Activated naive CD4-positive, alpha-beta T cell treated with anti-CD3 and anti-CD28 coated beads for 36 hours (primary cell): ENCODE measurements at regions of chr1 and their contacts with region 1.

Region 1: GRCh38 chr1:28581536-28582247 is 10.4 kb upstream of the RAB42 start:
- DNase-seq: peak; percentile 94
- H3K4me3 Mint-ChIP-seq: peak overlapping the region; percentile 98
- H3K27ac Mint-ChIP-seq: peak overlapping the region; percentile 94
- H3K4me1 Mint-ChIP-seq: peaks cover 29% of the 10 kb centered on the region
- H3K27me3 Mint-ChIP-seq: no peaks in the 10 kb centered on the region

Region 2: GRCh38 chr1:28369371-28370238 is 212.1 kb before region 1 on chr1 and contains the start of gene PHACTR4:
- CTCF ChIA-PET with region 1: no interaction called
- intact Hi-C with region 1: loop called (anchors 5 kb)
- DNase-seq: peak; percentile 86
- H3K4me3 Mint-ChIP-seq: peak within 1 kb of the TSS; percentile 85
- H3K27ac Mint-ChIP-seq: peak within 1 kb of the TSS; percentile 92
- H3K4me1 Mint-ChIP-seq: peaks cover 25% of the 10 kb centered on the region
- H3K27me3 Mint-ChIP-seq: no peaks in the 10 kb centered on the region
- total RNA-seq, gene PHACTR4: 16.3 to 17.2 TPM

Region 3: DNA sequence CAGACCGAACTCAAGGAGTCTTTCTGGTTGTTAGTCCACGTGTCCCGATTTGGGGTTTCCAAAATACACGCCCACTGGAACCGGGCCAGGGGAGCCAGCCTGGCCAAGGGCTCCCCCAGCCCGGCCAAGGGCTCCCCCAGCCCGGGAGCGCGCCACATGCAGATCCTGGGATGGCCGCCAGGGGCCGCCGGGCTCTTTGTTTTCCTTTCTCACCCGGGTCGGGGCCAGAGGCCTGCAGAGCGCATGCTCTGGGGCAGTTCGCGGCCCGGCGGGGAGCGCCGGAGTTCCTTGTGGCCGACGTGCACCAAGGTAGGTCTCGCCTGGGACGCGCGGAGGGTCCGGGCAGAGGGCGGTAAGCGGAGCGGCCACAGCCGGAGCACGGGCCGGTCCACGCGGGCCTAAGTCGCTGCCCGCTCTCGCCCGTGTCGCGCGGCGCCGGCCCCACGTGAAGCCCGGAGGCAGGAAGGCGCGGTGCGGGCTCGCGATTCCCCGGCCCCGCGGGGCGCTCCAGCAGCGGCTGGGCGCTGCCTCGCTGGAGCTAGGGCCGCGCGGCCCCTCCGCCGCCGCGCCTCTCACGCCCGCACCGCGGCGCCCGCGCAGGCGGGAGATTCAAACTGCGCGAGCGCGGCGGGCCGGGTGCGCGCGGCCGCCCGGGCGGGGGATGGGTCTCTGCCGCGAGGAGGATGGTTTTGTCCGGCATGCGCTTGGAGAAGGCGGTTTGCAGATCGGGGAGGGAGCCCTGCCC is 63.5 kb before region 1 on chr1:
- CTCF ChIA-PET with region 1: interaction called, 7 read pairs
- intact Hi-C with region 1: loop called (anchors 1 kb)
- DNase-seq: peak; percentile 92
- H3K4me3 Mint-ChIP-seq: peak overlapping the region; percentile 90
- H3K27ac Mint-ChIP-seq: peak overlapping the region; percentile 91
- H3K4me1 Mint-ChIP-seq: peaks cover 38% of the 10 kb centered on the region
- H3K27me3 Mint-ChIP-seq: no peaks in the 10 kb centered on the region

Region 4: GRCh38 chr1:28552758-28553663 is 28.7 kb before region 1 on chr1 and contains the start of gene TRNAU1AP:
- CTCF ChIA-PET with region 1: interaction called, 8 read pairs
- intact Hi-C with region 1: loop called (anchors 1 kb)
- DNase-seq: peak; percentile 99
- H3K4me3 Mint-ChIP-seq: peak within 1 kb of the TSS; percentile 94
- H3K27ac Mint-ChIP-seq: peak within 1 kb of the TSS; percentile 97
- H3K4me1 Mint-ChIP-seq: peaks cover 19% of the 10 kb centered on the region
- H3K27me3 Mint-ChIP-seq: no peaks in the 10 kb centered on the region
- total RNA-seq, gene TRNAU1AP: 36.7 to 39.4 TPM

Region 5: GRCh38 chr1:28668191-28668955 is 86.7 kb after region 1 on chr1 and contains the start of gene GMEB1:
- CTCF ChIA-PET with region 1: no interaction called
- intact Hi-C with region 1: loop called (anchors 1 kb)
- DNase-seq: peak; percentile 87
- H3K4me3 Mint-ChIP-seq: peak within 1 kb of the TSS; percentile 86
- H3K27ac Mint-ChIP-seq: peak within 1 kb of the TSS; percentile 96
- H3K4me1 Mint-ChIP-seq: peaks cover 11% of the 10 kb centered on the region
- H3K27me3 Mint-ChIP-seq: no peaks in the 10 kb centered on the region
- total RNA-seq, gene GMEB1: 15.8 to 16.3 TPM

Region 6: DNA sequence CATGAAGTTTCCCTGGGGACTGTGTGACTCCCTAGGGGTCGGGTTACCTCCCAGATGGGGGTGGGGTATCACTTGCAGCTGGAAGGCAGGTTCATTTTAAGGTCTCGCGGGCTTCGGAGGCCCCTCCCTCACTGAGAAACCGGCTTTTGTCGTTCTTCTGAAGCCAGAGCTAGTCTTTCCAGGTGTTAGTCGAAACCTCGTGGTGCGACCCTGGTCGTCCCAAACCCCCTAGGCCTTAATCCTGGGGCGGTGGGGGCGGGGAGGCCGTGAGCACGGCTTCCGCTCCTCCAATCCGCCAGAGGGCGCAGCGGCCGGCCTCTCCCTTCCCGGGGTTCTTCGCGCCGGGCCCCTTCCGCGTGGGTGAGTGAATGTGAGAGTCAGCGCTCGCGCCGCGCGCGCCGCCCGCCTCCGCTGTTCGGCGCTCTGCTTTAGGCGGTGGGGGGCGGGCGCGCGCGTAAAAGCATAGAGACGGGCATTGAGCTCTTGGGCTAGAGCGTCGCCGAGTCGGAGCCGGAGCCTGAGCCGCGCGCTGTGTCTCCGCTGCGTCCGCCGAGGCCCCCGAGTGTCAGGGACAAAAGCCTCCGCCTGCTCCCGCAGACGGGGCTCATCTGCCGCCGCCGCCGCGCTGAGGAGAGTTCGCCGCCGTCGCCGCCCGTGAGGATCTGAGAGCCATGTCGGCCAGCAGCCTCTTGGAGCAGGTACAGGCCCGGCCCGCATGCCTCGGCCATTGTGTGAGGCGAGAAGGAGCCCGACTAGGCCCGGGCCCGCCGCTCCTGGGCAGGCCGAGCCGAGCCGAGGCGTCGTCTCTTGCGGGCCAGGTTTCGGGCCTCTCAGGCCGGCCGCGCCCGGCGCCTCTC is 155.0 kb after region 1 on chr1 and contains the start of gene YTHDF2:
- CTCF ChIA-PET with region 1: no interaction called
- intact Hi-C with region 1: loop called (anchors 1 kb)
- DNase-seq: peak; percentile 99
- H3K4me3 Mint-ChIP-seq: peak within 1 kb of the TSS; percentile 96
- H3K27ac Mint-ChIP-seq: peak within 1 kb of the TSS; percentile 92
- H3K4me1 Mint-ChIP-seq: peaks cover 33% of the 10 kb centered on the region
- H3K27me3 Mint-ChIP-seq: no peaks in the 10 kb centered on the region
- total RNA-seq, gene YTHDF2: 64.9 to 66.1 TPM

Region 7: DNA sequence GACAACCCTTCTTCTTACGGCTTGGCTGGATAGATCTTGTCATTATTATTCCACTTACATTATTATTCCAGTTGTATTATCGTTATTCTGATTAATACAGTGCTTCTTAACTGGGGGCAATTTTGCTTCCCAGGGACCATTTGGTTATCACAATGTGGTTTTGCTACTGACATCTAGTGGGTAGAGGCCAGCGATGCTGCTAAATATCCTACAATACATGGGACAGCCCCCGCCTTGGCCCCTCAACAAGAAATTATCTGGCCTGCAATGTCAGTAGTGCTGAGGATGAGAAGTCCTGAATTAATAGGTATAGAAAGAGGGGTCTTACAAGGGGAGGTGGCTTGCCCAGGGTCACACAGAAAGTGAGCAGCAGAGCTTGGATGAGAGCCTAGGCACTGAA is 760.2 kb after region 1 on chr1:
- CTCF ChIA-PET with region 1: no interaction called
- intact Hi-C with region 1: no loop called
- DNase-seq: no peak
- H3K4me3 Mint-ChIP-seq: no peak overlapping the region
- H3K27ac Mint-ChIP-seq: no peak overlapping the region
- H3K4me1 Mint-ChIP-seq: no peaks in the 10 kb centered on the region
- H3K27me3 Mint-ChIP-seq: peaks cover 15% of the 10 kb centered on the region